CD8-positive, alpha-beta T cell (primary cell): ENCODE measurements at regions of chr3 and their contacts with region 1.

Region 1: DNA sequence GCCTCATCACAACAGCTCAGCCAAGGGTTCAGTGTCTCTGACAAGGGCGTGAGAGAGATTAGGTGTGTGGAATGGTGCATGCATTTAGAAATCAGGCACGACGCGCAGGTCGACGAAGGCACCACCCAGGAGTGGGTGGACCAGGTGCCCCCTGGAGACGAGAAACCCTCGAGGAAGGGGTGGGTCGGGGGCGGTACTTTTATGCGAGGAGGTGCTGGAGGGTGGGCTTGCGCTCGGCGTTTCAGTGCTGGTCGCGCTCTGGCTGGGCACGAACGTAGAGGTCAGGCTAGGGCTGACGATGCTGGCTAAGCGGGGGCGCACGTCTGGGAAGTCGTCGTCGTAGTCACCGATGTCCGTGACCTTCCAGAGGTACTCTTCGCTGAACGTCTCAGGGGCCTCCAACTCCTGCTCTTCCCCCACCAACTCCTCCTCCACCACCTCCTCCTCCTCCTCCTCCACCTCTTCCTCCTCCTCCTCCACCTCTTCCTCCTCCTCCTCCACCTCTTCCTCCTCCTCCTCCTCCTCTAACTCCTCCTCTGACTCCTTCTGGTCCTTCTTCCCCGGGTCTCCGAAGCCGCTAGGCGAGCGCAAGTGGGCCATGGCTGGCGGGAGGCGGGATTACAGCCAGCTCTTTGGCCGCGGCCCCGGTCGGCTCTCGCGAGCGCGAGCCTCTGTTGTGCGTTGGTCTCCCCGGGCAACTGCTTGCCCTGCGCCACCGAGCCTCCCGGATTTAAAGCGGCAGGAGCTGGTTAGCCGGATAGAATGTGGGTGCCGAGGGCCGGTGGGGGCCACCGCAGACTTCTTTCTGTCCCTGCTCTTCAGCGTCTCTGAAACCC is at the start of gene ERICH6:
- DNase-seq: peak; percentile 61 to 89 (median 74)
- ATAC-seq: peak; percentile 77
- H3K4me3 ChIP-seq: peak within 1 kb of the TSS; percentile 69 to 89
- H3K4me3 Mint-ChIP-seq: peak within 1 kb of the TSS; percentile 96
- H3K27ac ChIP-seq: peak within 1 kb of the TSS; percentile 83 to 98
- H3K27ac Mint-ChIP-seq: peak within 1 kb of the TSS; percentile 94
- H3K4me1 ChIP-seq: peaks cover 9% of the 10 kb centered on the region
- H3K4me1 Mint-ChIP-seq: peaks cover 23% of the 10 kb centered on the region
- H3K27me3 ChIP-seq: no peaks in the 10 kb centered on the region
- H3K27me3 Mint-ChIP-seq: no peaks in the 10 kb centered on the region
- CTCF ChIP-seq: no peak
- total RNA-seq, gene ERICH6: 0.28 to 0.52 TPM

Region 2: DNA sequence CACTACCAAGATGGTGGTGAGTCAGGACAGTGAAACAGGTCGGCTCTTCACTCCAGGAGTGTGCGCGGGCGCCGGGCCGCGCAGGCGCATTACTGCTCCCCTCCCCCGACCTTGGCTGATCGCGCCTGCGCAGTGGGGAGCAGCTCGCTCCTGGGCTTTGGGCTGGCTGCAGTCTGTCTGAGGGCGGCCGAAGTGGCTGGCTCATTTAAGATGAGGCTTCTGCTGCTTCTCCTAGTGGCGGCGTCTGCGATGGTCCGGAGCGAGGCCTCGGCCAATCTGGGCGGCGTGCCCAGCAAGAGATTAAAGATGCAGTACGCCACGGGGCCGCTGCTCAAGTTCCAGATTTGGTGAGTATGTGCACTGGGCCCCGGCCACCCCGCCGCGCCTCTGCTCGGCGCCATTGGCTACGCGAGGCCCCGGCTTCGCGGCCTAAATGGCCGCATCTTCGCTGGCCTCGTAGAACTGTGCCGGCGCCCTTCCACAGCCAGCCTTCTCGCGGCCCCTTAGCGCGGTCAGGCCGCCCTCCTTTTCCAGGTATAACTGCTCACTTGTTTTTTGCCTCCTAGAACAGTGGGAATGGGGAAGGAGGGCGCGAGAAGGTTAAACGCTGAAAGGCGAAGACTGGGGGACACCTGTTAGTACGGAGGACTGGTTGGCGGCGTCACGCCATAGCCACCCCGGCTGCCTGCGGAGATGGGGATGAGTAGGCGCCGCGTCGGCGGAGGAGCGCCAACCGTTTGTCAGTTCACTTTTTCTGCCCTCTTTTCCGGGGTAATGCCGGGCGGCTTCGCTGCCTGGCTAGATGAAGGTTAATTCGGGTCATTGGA is 100.2 kb before region 1 on chr3 and contains the start of gene SELENOT:
- CTCF ChIA-PET with region 1: no interaction called
- POLR2A ChIA-PET with region 1: interaction called, 18 read pairs
- intact Hi-C with region 1: loop called (anchors 1 to 2 kb)
- DNase-seq: peak; percentile 88 to 98 (median 94)
- ATAC-seq: peak; percentile 81
- H3K4me3 ChIP-seq: peak within 1 kb of the TSS; percentile 79 to 86
- H3K4me3 Mint-ChIP-seq: peak within 1 kb of the TSS; percentile 99
- H3K27ac ChIP-seq: peak within 1 kb of the TSS; percentile 88 to 95
- H3K27ac Mint-ChIP-seq: peak within 1 kb of the TSS; percentile 100
- H3K4me1 ChIP-seq: peaks cover 43% of the 10 kb centered on the region
- H3K4me1 Mint-ChIP-seq: peaks cover 71% of the 10 kb centered on the region
- H3K27me3 ChIP-seq: no peaks in the 10 kb centered on the region
- H3K27me3 Mint-ChIP-seq: no peaks in the 10 kb centered on the region
- CTCF ChIP-seq: no peak
- total RNA-seq, gene SELENOT: 130 to 139 TPM

Region 3: DNA sequence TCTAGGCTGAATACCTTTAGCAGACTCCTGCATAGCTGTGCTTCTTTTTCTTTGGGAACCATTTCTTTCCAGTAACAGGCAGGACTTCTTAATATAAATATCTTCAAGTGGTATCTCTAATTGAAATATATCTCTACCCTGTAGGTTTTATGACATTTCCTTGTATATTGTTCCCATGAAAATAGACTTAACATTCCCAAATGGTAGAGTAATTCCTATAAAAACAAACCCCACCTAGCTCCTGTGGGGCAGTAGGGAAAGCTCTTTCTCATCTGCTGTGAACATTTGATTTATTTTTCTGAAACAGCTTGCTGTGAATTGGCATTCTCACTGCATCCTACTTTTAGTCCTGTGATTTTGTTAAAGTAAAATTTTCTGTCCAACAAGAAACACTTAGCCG is 79.6 kb before region 1 on chr3:
- CTCF ChIA-PET with region 1: no interaction called
- POLR2A ChIA-PET with region 1: no interaction called
- intact Hi-C with region 1: loop called in 1 of 2 experiments (anchors 5 kb)
- DNase-seq: no peak
- ATAC-seq: no peak
- H3K4me3 ChIP-seq: no peak overlapping the region
- H3K4me3 Mint-ChIP-seq: no peak overlapping the region
- H3K27ac ChIP-seq: no peak overlapping the region
- H3K27ac Mint-ChIP-seq: no peak overlapping the region
- H3K4me1 ChIP-seq: peaks cover 11% of the 10 kb centered on the region
- H3K4me1 Mint-ChIP-seq: peaks cover 43% of the 10 kb centered on the region
- H3K27me3 ChIP-seq: no peaks in the 10 kb centered on the region
- H3K27me3 Mint-ChIP-seq: no peaks in the 10 kb centered on the region
- CTCF ChIP-seq: no peak